Activated CD4-positive, alpha-beta T cell treated with anti-CD3 and anti-CD28 coated beads, Interleukin-2, amount 10 ng/mL, durations not matched to agents 24 days and 14 days (primary cell): ENCODE measurements at regions of chr12 and their contacts with region 1.

Region 1: DNA sequence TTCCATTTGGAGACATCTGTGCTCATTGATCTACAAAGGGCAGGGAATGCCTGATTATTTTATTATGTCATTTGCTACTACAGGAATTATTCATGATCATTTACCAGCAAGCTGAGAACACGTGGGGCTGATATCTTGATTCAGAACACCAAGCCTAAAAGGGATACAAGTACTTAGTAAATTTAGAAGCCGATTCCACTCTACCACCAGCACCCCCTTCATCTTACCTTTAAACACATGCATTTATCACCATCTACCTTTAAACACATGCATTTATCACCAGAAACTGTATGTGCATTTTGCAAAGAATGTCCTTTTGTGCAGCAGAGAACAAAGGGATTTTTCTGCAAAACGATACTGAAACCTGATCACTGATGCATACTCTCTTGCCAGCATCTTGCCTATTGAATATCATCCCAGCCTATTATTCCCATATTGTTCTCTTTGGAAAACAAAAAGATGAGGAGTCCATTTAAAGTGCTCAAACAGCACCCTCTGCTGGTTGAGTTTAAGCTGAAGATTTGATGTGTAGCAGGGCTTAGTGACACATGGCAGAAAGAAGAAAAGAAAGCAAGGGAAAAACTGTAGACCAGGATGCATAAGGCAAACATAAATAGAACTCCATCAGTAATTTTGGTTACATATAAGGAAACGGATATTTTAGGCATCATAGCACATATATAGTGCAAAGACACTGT is 132.6 kb upstream of the PLEKHG7 start:
- DNase-seq: peak; percentile 87
- H3K4me3 Mint-ChIP-seq: no peak overlapping the region
- H3K27ac Mint-ChIP-seq: no peak overlapping the region
- H3K4me1 Mint-ChIP-seq: peaks cover 21% of the 10 kb centered on the region
- H3K27me3 Mint-ChIP-seq: no peaks in the 10 kb centered on the region

Region 2: DNA sequence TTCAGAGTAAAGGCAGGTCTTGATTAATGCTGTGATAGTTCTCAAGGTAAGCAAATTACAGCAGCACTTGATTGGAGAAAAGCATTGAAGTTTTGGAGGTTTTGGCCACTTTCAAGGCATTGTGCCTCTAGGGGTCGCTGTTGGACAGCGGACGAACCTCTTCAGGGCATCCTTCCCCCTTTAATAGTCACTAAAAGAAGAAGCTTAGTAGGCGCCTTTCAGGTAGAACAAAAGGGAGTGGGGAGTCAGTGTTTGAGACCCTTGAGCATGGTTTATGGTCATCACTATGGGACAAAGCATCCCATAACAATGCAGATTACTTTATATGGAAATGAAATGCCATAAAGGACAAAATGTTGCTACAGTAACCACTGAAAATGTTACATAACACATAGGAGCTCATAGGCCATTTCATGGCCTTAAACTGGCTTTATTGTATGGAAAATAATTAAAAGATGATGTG is 1188.1 kb before region 1 on chr12:
- intact Hi-C with region 1: loop called (anchors 1 kb)
- DNase-seq: peak; percentile 94
- H3K4me3 Mint-ChIP-seq: peak overlapping the region; percentile 84
- H3K27ac Mint-ChIP-seq: peak overlapping the region; percentile 39
- H3K4me1 Mint-ChIP-seq: peaks cover 7% of the 10 kb centered on the region
- H3K27me3 Mint-ChIP-seq: peaks cover 12% of the 10 kb centered on the region

Region 3: DNA sequence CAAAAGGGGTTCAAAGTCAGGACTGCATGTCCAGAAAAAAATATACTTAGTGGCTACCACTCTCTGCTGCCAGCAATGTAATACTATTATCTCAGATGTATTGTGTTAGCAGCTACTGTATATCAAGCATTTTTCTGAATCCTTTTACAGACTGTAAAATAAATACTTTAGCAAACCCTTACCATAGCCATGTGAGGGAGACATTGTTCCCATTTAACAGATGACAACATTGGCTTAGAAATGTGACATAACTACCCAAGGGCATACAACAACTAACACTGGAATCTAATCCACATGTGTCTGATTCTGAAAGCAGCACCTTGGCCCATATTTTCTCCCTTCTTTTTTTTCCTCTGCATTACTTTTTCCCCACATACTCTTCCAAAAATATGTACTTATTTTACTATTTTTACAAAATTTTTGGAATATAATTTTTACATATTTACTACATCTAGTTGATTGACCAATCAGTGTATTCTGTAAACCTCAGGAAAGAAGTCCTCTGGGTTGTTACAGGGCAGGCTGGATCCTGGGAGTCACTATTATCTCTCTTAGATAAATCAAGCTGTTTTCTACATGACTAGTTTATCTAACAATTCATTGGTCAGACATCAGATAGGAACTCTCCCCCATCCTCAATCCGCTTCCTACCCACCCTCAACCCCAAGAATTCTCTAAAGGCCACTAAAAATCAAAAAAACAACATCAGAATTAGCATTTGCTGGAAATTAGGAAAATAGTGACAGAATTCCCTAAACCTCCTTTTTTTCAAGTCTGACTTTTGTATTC is 578.6 kb before region 1 on chr12:
- intact Hi-C with region 1: loop called (anchors 1 kb)
- DNase-seq: peak; percentile 68
- H3K4me3 Mint-ChIP-seq: no peak overlapping the region
- H3K27ac Mint-ChIP-seq: no peak overlapping the region
- H3K4me1 Mint-ChIP-seq: peaks cover 5% of the 10 kb centered on the region
- H3K27me3 Mint-ChIP-seq: no peaks in the 10 kb centered on the region

Region 4: DNA sequence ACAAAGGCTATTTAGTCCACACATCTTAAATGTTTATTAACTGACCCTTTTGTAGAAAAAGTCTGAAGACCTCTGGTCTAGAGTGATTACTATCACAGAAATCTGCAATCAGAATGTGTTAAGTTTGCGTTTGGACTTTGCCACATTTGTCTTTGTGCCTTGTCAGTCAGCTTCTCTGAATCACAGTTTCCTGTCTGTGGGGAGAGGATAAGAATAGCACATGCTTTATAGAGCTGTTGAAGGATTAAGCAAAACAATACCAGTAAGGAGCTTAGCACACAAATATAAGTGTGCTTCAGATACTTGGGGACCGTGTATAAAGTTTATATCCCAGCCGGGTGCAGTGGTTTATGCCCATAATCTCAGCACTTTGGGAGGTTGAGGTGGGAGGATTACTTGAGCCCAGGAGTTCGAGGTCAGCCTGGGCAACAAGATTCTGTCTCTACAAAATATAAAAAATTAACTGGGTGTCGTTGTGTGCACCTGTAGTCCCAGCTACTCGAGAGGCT is 361.5 kb before region 1 on chr12:
- intact Hi-C with region 1: loop called (anchors 1 kb)
- DNase-seq: peak; percentile 82
- H3K4me3 Mint-ChIP-seq: peak overlapping the region; percentile 66
- H3K27ac Mint-ChIP-seq: peak overlapping the region; percentile 94
- H3K4me1 Mint-ChIP-seq: peaks cover 36% of the 10 kb centered on the region
- H3K27me3 Mint-ChIP-seq: no peaks in the 10 kb centered on the region

Region 5: GRCh38 chr12:92505254-92506231 is 64.7 kb before region 1 on chr12:
- intact Hi-C with region 1: loop called (anchors 1 kb)
- DNase-seq: peak; percentile 83
- H3K4me3 Mint-ChIP-seq: peak overlapping the region; percentile 89
- H3K27ac Mint-ChIP-seq: peak overlapping the region; percentile 98
- H3K4me1 Mint-ChIP-seq: peaks cover 42% of the 10 kb centered on the region
- H3K27me3 Mint-ChIP-seq: no peaks in the 10 kb centered on the region

Region 6: GRCh38 chr12:92551853-92552397 is 18.3 kb before region 1 on chr12:
- intact Hi-C with region 1: loop called (anchors 1 kb)
- DNase-seq: peak; percentile 71
- H3K4me3 Mint-ChIP-seq: no peak overlapping the region
- H3K27ac Mint-ChIP-seq: no peak overlapping the region
- H3K4me1 Mint-ChIP-seq: peaks cover 39% of the 10 kb centered on the region
- H3K27me3 Mint-ChIP-seq: no peaks in the 10 kb centered on the region

Region 7: GRCh38 chr12:92649511-92650227 is 79.5 kb after region 1 on chr12:
- intact Hi-C with region 1: loop called (anchors 2 kb)
- DNase-seq: peak; percentile 87
- H3K4me3 Mint-ChIP-seq: no peak overlapping the region
- H3K27ac Mint-ChIP-seq: no peak overlapping the region
- H3K4me1 Mint-ChIP-seq: peaks cover 8% of the 10 kb centered on the region
- H3K27me3 Mint-ChIP-seq: no peaks in the 10 kb centered on the region

Region 8: DNA sequence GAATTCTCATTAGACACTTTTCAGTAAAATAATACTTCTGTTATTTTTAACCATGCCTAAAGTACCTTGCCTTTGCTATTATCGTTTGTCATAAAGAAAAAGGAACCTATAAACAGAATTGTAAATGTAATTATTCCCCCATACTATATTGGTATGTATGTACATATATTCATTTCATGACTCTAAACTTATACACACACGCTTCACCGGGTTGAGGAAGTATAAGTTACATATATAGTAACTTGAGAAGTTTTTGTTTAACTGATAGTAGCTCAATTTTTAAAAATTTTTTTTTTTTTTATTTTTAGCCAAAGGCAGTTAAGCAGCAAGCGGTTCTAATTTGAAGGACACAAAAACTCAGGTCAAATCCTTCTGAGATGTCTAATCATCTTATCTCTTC is 240.2 kb after region 1 on chr12:
- intact Hi-C with region 1: no loop called
- DNase-seq: no peak
- H3K4me3 Mint-ChIP-seq: no peak overlapping the region
- H3K27ac Mint-ChIP-seq: no peak overlapping the region
- H3K4me1 Mint-ChIP-seq: no peaks in the 10 kb centered on the region
- H3K27me3 Mint-ChIP-seq: no peaks in the 10 kb centered on the region